ENCODE measurements at regions of chr12 and their contacts with region 1.

Region 1: GRCh38 chr12:132429946-132430643 is 59.9 kb upstream of the FBRSL1 start:
- DNase-seq: peak in 1 of 5 donors; percentile 48
- H3K4me3 ChIP-seq: no peak overlapping the region
- H3K27ac ChIP-seq: no peak overlapping the region
- H3K4me1 ChIP-seq: peaks cover 7% of the 10 kb centered on the region
- H3K27me3 ChIP-seq: no peaks in the 10 kb centered on the region
- CTCF ChIP-seq: no peak
- EP300 ChIP-seq: no peak
- POLR2A ChIP-seq: no peak

Region 2: GRCh38 chr12:132289356-132290202 is 140.5 kb before region 1 on chr12:
- intact Hi-C with region 1: no loop called
- DNase-seq: no peak
- H3K4me3 ChIP-seq: no peak overlapping the region
- H3K27ac ChIP-seq: no peak overlapping the region
- H3K4me1 ChIP-seq: peaks cover 2% of the 10 kb centered on the region
- H3K27me3 ChIP-seq: no peaks in the 10 kb centered on the region
- CTCF ChIP-seq: no peak
- EP300 ChIP-seq: no peak
- POLR2A ChIP-seq: no peak

Region 3: GRCh38 chr12:132356691-132357622 is 73.1 kb before region 1 on chr12:
- intact Hi-C with region 1: no loop called
- DNase-seq: peak in 3 of 5 donors; percentile 47 to 75 (median 59)
- H3K4me3 ChIP-seq: no peak overlapping the region
- H3K27ac ChIP-seq: no peak overlapping the region
- H3K4me1 ChIP-seq: peaks cover 2% of the 10 kb centered on the region
- H3K27me3 ChIP-seq: no peaks in the 10 kb centered on the region
- CTCF ChIP-seq: no peak
- EP300 ChIP-seq: no peak
- POLR2A ChIP-seq: no peak

Region 4: DNA sequence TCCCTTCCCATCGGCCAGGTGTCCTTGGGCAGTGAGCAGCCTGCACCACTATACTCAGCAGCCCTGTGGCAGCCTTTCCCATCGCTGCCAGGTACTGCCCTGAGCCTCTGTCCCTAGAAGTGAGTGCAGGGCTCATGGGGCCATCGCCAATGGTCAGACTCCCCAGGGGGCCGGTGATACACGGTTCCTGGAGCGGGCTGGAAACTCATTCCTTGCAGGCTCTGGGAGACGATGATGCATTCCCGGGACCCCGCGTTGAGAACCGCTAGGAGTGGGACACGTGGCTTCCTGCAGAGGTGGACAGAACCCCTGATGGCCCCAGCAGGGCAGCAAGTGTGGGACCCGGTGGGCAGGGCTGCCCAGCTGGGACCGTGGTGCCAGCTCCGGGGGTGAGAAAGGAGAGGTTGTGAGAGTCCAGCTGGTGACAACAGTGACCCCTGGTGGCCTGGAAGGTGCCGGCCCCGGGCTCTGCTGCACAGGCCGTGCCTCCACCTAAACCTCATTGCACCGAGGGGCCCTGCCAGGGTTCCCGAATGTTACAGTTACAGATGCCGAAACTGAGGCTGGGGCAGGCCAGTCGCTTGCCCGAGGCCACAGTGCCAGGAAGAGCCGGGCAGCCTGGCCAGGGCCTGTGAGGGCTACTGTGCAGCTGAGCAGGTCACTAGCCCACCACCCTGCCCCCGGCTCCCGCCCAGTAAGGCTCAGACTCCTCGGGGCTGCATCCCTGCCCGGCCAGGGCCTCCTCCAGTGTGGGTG is 93.7 kb after region 1 on chr12:
- intact Hi-C with region 1: loop called in 1 of 4 experiments (anchors 10 kb)
- DNase-seq: peak; percentile 38 to 72 (median 65)
- H3K4me3 ChIP-seq: no peak overlapping the region
- H3K27ac ChIP-seq: no peak overlapping the region
- H3K4me1 ChIP-seq: no peaks in the 10 kb centered on the region
- H3K27me3 ChIP-seq: no peaks in the 10 kb centered on the region
- CTCF ChIP-seq: peak; percentile 25 to 52 (median 49)
- EP300 ChIP-seq: no peak
- POLR2A ChIP-seq: no peak

Region 5: GRCh38 chr12:132614861-132615578 is 184.9 kb after region 1 on chr12:
- intact Hi-C with region 1: loop called in 1 of 4 experiments (anchors 10 kb)
- DNase-seq: peak; percentile 57 to 83 (median 79)
- H3K4me3 ChIP-seq: no peak overlapping the region
- H3K27ac ChIP-seq: no peak overlapping the region
- H3K4me1 ChIP-seq: peaks cover 3% of the 10 kb centered on the region
- H3K27me3 ChIP-seq: peaks cover 9% of the 10 kb centered on the region
- CTCF ChIP-seq: peak; percentile 51 to 57 (median 53)
- EP300 ChIP-seq: no peak
- POLR2A ChIP-seq: no peak